ENCODE measurements at regions of chr16 and their contacts with region 1.

Region 1: DNA sequence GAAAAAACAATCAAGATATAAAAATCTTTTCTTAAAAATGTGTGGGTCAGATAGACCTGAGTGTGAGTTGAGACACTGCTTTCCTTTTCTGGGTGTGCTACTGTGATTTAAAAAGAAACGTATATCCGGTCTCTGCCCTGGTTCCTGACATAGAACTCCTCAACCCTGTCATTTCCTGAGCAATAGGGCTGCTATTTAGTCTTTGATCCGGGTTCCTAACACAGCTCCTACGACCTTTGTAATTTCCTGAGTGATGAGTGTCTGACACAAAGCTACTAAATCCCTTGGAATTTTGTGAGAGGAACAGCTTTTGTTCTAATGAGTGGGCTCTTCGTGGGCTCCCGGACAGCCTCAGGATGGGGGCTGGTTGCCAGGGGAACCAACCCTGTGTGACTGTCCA is 93.9 kb upstream of the FA2H start:
- DNase-seq: no peak
- ATAC-seq: peak; percentile 45; the same call in 1 of the 2 replicates
- H3K4me3 ChIP-seq: no peak overlapping the region
- H3K27ac ChIP-seq: no peak overlapping the region
- H3K4me1 ChIP-seq: no peaks in the 10 kb centered on the region
- H3K27me3 ChIP-seq: no peaks in the 10 kb centered on the region
- CTCF ChIP-seq: no peak

Region 2: GRCh38 chr16:74695450-74696422 is 172.8 kb before region 1 on chr16:
- CTCF ChIA-PET with region 1: no interaction called
- POLR2A ChIA-PET with region 1: interaction called, 10 read pairs
- in situ Hi-C with region 1: no loop called
- intact Hi-C with region 1: no loop called
- DNase-seq: peak; percentile 79
- ATAC-seq: peak; percentile 96
- H3K4me3 ChIP-seq: peak overlapping the region; percentile 46 to 68
- H3K27ac ChIP-seq: peak overlapping the region; percentile 76; the same call in 1 of the 2 replicates
- H3K4me1 ChIP-seq: no peaks in the 10 kb centered on the region; the same call in 1 of the 2 replicates
- H3K27me3 ChIP-seq: no peaks in the 10 kb centered on the region
- CTCF ChIP-seq: no peak

Region 3: DNA sequence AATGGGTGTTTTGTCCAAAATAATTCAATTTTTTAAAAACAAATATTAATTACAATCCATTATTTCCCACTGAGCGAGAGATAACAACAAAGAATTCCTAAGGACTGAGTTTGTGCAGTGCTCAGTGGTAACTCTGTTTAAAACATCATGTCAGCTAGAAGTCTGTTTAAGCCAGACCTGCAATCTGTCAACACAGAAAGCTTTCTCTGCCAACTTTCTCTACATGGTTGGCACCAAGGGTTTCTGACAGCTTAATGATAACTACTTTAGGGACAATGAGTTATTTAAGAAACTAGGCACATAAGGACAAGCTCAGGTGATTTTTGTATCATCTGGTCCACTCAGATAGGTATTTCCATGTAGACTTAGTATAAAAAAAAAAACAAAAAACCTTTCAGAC is 34.6 kb after region 1 on chr16:
- CTCF ChIA-PET with region 1: no interaction called
- POLR2A ChIA-PET with region 1: interaction called, 11 read pairs
- in situ Hi-C with region 1: no loop called
- intact Hi-C with region 1: no loop called
- DNase-seq: no peak
- ATAC-seq: no peak
- H3K4me3 ChIP-seq: no peak overlapping the region
- H3K27ac ChIP-seq: no peak overlapping the region
- H3K4me1 ChIP-seq: no peaks in the 10 kb centered on the region
- H3K27me3 ChIP-seq: no peaks in the 10 kb centered on the region
- CTCF ChIP-seq: no peak

Measured in Panc1 (cell line).